ENCODE measurements at regions of chr2 and their contacts with region 1.

Region 1: DNA sequence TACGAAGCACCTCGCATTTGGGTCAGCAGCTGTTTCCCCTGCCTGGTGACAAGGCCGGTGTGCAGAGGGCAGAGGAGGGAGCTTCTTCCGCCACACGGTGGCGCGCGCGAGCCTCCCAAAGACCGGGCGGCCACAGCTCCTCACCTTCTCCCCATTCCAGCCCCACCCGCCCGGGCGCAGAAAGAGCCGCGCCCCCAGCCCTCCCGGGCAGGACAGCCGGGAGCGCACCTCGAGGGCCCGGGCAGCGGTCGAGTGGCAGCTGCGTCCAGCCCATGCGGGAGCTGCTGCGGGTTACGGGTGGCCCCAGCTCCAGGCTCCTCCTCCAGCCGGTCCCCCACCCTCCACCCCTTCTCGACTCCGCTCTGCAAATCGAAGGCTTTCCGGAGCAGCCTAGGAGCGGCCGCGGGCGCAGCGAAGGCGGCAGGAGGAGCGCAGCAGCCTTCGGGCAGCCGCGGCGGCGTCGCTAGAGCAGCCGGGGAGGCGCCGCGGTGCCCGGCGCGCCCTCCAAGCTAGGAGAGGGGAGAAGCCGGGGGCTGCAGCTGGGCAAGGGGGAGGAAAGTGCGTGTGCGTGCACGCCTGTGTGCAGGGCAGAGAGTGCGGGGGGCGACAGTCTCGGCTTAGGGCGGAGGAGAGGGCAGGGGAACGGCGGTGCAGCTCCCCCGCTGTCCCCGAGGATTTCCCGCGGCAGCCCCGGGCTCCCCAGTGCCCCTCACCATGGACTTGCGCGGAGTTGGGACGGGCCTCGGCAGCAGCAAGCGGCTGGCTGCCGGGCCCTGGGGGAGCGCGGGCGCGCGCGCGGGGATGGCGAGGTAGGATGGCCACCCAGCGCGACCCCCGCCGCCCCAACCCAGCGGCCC is at the start of gene CCDC85A:
- DNase-seq: peak; percentile 84 to 85
- H3K4me3 ChIP-seq: peak within 1 kb of the TSS; percentile 35 to 59
- H3K27ac ChIP-seq: peak within 1 kb of the TSS; percentile 54 to 89
- H3K4me1 ChIP-seq: peaks cover 3 to 6% of the 10 kb centered on the region in 2 donors
- H3K27me3 ChIP-seq: no peaks in the 10 kb centered on the region
- CTCF ChIP-seq: peak; percentile 84 to 91 (median 88)
- POLR2A ChIP-seq: no peak
- total RNA-seq, gene CCDC85A: 4.7 to 23.2 (median 16.8) TPM

Region 2: DNA sequence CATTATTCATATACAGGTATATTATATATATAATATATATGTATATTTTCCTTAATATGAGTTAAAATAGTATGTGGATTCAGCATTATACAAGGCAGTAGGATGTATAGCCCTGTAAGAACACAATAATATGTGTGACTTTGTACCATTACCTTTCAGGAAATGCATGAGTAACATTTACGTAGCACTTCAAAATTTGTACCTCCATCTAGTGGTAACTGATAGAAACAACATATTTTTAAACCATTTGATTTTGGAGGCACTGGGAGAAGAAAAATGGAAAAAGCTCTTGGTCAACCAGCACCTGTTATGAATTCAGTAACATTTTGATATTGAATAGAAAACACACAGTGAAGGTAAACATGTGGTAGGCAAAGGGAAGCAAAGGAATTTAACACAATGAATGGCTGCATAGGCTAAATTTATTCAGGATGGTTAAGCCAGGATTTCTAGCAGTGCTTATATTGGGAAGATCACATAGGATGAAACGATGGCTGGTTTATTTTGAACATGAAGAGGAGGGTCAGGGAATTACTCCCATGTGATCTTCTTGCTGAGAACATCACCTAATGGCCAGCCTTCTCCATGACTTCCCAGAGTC is 565.4 kb after region 1 on chr2:
- intact Hi-C with region 1: loop called (anchors 5 kb)
- DNase-seq: no peak
- H3K4me3 ChIP-seq: no peak overlapping the region
- H3K27ac ChIP-seq: no peak overlapping the region
- H3K4me1 ChIP-seq: no peaks in the 10 kb centered on the region
- H3K27me3 ChIP-seq: no peaks in the 10 kb centered on the region
- CTCF ChIP-seq: peak; percentile 24 to 44 (median 40)
- POLR2A ChIP-seq: no peak

Measured in uterus (tissue), 4 donors.